ENCODE measurements at regions of chr6 and their contacts with region 1.

Region 1: DNA sequence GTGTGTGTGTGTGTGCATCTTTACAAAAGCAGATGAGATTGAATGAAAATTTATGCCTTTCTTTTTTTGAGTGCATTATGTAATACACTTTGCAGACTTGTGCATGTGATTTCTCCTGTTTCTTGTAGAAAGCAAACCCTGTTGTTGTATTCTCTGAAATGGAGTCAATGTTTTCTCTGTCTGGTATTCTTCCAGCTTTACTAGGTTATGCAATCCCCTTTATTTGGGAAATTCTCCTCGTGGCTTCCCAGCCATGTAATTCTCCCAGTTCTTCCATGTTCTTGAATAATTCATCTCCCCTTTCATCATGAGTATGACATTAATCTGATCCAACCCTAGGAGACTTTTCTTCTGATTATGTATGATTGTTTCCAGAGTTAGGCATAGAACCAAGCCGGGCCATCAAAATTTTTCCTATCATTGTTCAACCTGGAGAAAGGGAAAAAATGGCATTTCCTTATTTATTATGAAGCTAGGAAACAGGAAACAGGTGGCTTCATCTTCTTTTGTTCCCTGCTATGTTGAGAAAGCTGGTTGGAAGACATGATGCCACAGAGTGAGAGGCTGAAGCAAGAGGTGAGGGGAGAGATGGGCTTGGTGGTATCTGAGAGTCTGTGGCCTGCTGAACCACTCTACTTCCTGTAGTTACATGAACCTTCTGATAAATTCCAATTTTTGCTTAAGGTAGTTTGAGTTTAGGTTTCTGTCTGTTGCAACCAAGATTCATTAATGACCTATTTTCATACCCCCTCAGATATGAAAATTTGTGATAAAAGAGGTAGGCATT is 68.8 kb downstream of the PRL start:
- DNase-seq: peak; percentile 84
- H3K4me3 ChIP-seq: no peak overlapping the region
- H3K27ac ChIP-seq: no peak overlapping the region
- H3K4me1 ChIP-seq: peaks cover 7% of the 10 kb centered on the region
- H3K27me3 ChIP-seq: peaks cover 0 to 2% of the 10 kb centered on the region in 2 experiments
- CTCF ChIP-seq: no peak
- POLR2A ChIP-seq: no peak

Region 2: GRCh38 chr6:22471132-22471690 is 243.2 kb after region 1 on chr6:
- CTCF ChIA-PET with region 1: no interaction called
- POLR2A ChIA-PET with region 1: no interaction called
- dilution Hi-C with region 1: no loop called
- intact Hi-C with region 1: loop called (anchors 1 kb)
- DNase-seq: peak; percentile 98
- H3K4me3 ChIP-seq: no peak overlapping the region
- H3K27ac ChIP-seq: peak overlapping the region; percentile 56
- H3K4me1 ChIP-seq: peaks cover 27% of the 10 kb centered on the region
- H3K27me3 ChIP-seq: no peaks in the 10 kb centered on the region
- CTCF ChIP-seq: no peak
- POLR2A ChIP-seq: no peak